ENCODE measurements at regions of chr7 and their contacts with region 1.

Region 1: GRCh38 chr7:100271716-100272537 is 35.6 kb upstream of the SPDYE3 start:
- DNase-seq: peak; percentile 59
- ATAC-seq: peak; percentile 89
- H3K4me3 ChIP-seq: peak overlapping the region; percentile 52 to 55
- H3K27ac ChIP-seq: 0 out of 2 replicates have a peak overlapping the region, but pooled peaks have one; percentile 30
- H3K4me1 ChIP-seq: peaks cover 8% of the 10 kb centered on the region; the same call in 1 of the 2 replicates
- H3K27me3 ChIP-seq: no peaks in the 10 kb centered on the region
- CTCF ChIP-seq: no peak; the same call in 1 of the 2 replicates

Region 2: DNA sequence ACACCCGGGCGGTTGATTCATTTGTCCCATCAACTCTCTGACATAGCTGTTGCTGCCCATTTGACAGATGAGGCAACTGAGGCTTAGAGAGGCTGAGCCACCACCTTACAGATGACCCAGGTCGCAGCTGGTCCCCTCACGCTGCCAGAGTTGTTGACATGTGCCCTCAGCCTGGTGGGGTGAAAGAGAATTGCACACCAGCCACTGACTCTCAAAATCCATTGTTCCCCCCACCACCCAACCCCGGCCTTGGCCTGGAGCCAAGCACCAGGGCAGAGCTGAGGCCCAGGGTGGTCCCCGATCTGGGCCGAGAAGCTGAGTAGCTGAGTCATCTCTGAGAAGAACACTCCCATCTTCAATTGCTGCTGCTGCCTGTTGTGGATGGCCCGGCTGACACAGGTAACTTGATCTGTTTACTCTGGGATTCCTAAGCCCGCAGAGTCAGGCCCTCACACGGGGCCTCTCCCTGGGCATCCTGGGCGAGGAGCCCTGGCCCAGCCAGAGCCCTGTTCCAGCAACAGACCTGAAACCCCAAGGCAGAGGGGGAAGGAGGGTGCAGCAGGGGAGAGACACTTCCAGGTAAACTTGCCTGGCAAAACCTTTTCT is 24.7 kb before region 1 on chr7:
- CTCF ChIA-PET with region 1: interaction called, 10 read pairs
- POLR2A ChIA-PET with region 1: no interaction called
- in situ Hi-C with region 1: no loop called
- intact Hi-C with region 1: no loop called
- DNase-seq: peak; percentile 32
- ATAC-seq: peak; percentile 90
- H3K4me3 ChIP-seq: no peak overlapping the region
- H3K27ac ChIP-seq: peak overlapping the region; percentile 34
- H3K4me1 ChIP-seq: peaks cover 12% of the 10 kb centered on the region
- H3K27me3 ChIP-seq: no peaks in the 10 kb centered on the region
- CTCF ChIP-seq: no peak